ENCODE measurements at regions of chr16 and their contacts with region 1.

Region 1: GRCh38 chr16:28069971-28070794 is 6.7 kb upstream of the GSG1L start:
- DNase-seq: no peak
- H3K4me3 ChIP-seq: no peak overlapping the region
- H3K27ac ChIP-seq: no peak overlapping the region
- H3K4me1 ChIP-seq: no peaks in the 10 kb centered on the region
- H3K27me3 ChIP-seq: peaks cover 2% of the 10 kb centered on the region
- CTCF ChIP-seq: no peak

Region 2: DNA sequence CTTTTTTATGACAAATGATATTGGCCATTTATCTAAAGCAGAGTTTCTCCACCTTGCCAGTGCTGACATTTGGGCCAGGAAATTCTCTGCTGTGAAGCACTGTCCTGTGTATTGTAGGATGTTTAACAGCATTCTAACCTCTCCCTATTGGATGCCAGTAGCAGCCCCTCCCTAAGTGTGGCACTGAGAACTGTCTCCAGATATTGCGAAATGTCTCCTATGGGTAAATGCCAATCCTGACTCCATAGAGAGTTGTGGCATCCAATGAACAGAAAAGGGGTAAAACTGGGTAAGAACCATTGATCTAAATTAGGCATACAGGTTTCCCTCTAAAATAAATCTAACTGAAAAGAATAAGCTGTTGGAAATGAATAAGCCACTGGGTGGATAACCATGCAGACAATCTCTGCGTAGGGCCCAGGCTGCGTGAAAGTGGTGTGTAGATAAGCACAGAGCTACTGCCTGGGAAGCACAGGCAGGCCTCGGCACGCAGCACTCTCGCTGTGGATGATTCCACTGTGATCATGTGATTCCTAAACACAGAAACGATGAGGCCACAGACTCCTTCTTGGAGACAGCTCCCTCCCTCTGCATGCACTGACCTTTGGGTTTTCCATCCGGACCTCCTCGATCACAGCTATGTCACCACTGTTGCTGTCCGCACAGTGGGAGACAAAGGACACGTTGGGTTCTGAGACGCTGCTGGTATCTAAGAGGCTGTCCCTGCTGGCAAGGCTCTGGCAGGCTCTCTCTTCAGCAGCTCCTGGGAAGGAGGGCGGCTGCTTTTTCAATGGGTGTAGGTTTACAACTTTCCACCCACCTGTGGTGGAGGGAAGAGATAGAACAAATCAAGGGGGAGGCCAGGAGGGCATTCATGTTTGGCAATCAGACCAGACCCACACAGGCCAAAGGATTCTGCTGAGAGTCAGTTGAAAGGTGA is 564.6 kb before region 1 on chr16:
- CTCF ChIA-PET with region 1: no interaction called
- dilution Hi-C with region 1: no loop called
- in situ Hi-C with region 1: no loop called
- intact Hi-C with region 1: loop called (anchors 10 kb)
- DNase-seq: peak; percentile 80
- H3K4me3 ChIP-seq: no peak overlapping the region
- H3K27ac ChIP-seq: peak overlapping the region; percentile 27
- H3K4me1 ChIP-seq: peaks cover 22% of the 10 kb centered on the region
- H3K27me3 ChIP-seq: no peaks in the 10 kb centered on the region
- CTCF ChIP-seq: no peak

Region 3: DNA sequence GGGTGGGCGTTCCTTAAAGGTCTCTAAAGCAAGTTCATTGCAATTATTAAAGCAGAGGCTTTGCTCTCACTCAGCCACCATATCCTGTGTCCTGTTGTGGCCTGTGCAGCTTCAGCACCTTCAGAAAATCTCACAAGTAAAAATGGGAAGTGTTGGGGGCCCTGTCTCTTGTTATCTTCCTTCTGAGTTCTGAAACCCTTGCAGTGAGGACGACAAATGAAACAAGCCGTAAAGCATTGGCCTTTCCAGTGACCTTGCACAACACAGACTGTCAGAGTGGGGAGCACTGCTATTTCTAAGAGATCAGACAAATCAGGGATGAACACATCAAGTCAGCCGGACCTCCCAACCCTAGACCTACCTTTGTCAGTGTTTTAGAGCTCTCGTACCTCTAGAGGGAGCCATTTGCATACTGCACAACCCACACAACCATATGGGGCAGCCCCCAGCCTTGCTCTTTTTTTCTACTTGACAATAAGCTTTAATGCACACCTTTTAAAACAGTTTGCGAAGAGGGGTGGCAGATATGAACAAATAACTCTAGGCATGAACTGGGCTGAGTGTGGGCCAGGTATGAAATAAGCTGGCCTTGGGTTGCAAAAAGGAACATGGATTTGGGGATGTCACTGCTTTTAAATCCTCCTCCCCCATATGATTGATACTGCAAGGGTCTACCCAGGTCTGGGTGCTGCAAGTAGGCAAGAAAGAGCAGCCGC is 430.5 kb before region 1 on chr16:
- CTCF ChIA-PET with region 1: no interaction called
- dilution Hi-C with region 1: no loop called
- in situ Hi-C with region 1: loop called in 1 of 2 experiments (anchors 10 kb)
- intact Hi-C with region 1: loop called (anchors 2 kb)
- DNase-seq: peak; percentile 41
- H3K4me3 ChIP-seq: no peak overlapping the region
- H3K27ac ChIP-seq: no peak overlapping the region
- H3K4me1 ChIP-seq: peaks cover 7% of the 10 kb centered on the region
- H3K27me3 ChIP-seq: no peaks in the 10 kb centered on the region
- CTCF ChIP-seq: peak; percentile 58 to 81

Region 4: DNA sequence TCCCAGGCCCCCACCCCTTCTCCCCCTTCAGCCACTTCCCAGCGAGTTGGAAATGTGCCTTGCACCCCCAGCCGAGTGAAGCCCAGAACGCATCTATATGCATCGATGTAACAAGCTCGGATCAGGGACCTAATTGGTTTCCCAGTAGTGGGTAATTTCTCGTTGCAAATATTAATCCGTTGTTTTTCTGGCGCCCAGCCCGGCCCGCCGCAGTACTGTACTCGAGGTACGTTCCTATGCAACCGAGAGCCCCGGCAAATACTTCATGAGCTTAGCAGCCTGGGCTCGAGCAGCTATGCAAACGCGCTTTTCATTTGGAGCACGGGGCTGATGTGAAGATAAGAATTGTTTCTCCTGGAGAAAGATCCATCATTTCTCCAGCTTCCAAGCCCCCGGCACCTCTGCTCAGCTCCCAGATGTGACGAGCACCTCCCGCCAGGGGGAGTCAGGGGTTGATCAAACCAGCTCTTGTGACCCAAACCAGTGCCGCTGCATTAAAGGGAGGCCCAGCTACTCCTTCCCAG is 290.5 kb before region 1 on chr16:
- CTCF ChIA-PET with region 1: interaction called, 3 read pairs
- dilution Hi-C with region 1: no loop called
- in situ Hi-C with region 1: no loop called
- intact Hi-C with region 1: loop called (anchors 2 kb)
- DNase-seq: peak; percentile 12
- H3K4me3 ChIP-seq: no peak overlapping the region
- H3K27ac ChIP-seq: no peak overlapping the region
- H3K4me1 ChIP-seq: no peaks in the 10 kb centered on the region
- H3K27me3 ChIP-seq: no peaks in the 10 kb centered on the region
- CTCF ChIP-seq: peak; percentile 22 to 45

Region 5: DNA sequence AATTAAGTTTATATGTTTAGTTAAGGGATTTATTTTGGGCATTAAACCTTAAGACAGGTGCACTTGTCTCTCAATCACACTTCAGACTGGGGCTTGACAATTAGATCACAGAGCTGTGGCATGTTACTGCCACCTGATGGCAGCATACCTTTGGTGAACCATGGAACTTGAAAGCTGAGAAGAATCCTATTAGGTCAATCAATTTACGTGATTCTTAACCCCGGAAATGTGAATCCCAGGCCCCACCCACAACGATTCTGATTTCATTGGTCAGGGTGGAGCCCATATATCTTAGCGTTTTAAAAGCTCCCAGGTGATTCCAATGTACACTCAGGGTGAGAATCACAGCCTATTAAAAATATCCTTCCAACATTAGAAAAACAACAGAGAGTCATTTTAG is 97.7 kb before region 1 on chr16:
- CTCF ChIA-PET with region 1: interaction called, 12 read pairs
- dilution Hi-C with region 1: no loop called
- in situ Hi-C with region 1: loop called in 1 of 2 experiments (anchors 10 kb)
- intact Hi-C with region 1: loop called (anchors 2 kb)
- DNase-seq: peak; percentile 55
- H3K4me3 ChIP-seq: no peak overlapping the region
- H3K27ac ChIP-seq: no peak overlapping the region
- H3K4me1 ChIP-seq: no peaks in the 10 kb centered on the region
- H3K27me3 ChIP-seq: no peaks in the 10 kb centered on the region
- CTCF ChIP-seq: peak; percentile 57 to 76

Measured in mammary epithelial cell (primary cell).